ENCODE measurements at regions of chr1 and their contacts with region 1.

Region 1: GRCh38 chr1:28648474-28649198 is at the start of gene RNU11:
- DNase-seq: peak in 8 of 9 donors; percentile 67 to 97 (median 91)
- ATAC-seq: peak; percentile 86
- H3K4me3 ChIP-seq: peak within 1 kb of the TSS; percentile 60
- H3K4me3 Mint-ChIP-seq: peak within 1 kb of the TSS; percentile 70 to 96 (median 90)
- H3K27ac ChIP-seq: peak within 1 kb of the TSS; percentile 93
- H3K27ac Mint-ChIP-seq: peak within 1 kb of the TSS; percentile 97 to 100 (median 99)
- H3K4me1 ChIP-seq: peaks cover 25 to 27% of the 10 kb centered on the region in 2 donors
- H3K4me1 Mint-ChIP-seq: peaks cover 14 to 39% (median 31%) of the 10 kb centered on the region in 7 donors
- H3K27me3 ChIP-seq: no peaks in the 10 kb centered on the region
- H3K27me3 Mint-ChIP-seq: no peaks in the 10 kb centered on the region
- total RNA-seq, gene RNU11: not detected

Region 2: DNA sequence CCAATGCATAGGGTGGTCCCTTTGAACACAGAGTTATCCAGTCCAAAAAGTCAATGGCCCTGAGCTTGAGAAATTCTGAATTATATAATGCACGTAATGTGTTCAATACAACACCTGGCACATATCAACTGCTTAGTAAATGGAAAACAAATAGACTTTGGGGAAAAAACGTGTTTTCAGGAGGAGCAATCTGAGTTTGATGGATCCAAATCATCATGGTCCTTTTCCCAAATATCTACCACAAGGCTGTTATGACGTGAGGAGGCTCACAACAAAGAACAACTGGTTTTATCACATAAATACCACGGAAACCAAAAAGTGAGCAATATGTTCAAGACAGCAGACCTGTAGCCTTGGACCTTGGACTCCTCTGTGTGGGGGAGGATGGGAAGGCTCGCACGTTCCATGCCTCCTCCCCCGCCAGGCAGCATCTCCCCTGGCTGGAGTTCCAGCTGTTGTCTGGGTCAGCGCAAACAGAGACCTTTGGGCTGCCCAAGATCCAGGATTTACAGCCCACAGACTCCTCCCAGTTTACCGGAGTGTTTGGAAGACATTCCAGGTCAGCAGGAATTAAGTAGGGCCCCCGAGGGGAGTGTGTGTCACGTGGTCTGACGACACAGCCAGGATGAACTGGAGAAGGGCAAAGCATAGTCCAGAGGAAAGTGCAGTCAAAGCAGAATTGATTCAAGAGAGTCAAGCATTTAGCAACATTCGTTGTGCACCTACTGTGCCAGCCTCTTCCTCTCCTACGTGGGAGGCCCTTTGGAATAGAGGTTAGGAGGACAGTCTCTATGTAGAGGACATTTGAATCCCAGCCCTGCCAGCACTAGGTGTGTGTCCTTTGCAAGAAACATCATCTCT is 352.0 kb before region 1 on chr1:
- CTCF ChIA-PET with region 1: no interaction called
- POLR2A ChIA-PET with region 1: no interaction called
- intact Hi-C with region 1: no loop called
- DNase-seq: no peak
- ATAC-seq: no peak
- H3K4me3 ChIP-seq: no peak overlapping the region
- H3K4me3 Mint-ChIP-seq: no peak overlapping the region
- H3K27ac ChIP-seq: no peak overlapping the region
- H3K27ac Mint-ChIP-seq: no peak overlapping the region
- H3K4me1 ChIP-seq: no peaks in the 10 kb centered on the region
- H3K4me1 Mint-ChIP-seq: peaks cover 0 to 12% (median 0%) of the 10 kb centered on the region in 7 donors
- H3K27me3 ChIP-seq: no peaks in the 10 kb centered on the region
- H3K27me3 Mint-ChIP-seq: peaks cover 0 to 7% (median 4%) of the 10 kb centered on the region in 5 donors

Region 3: DNA sequence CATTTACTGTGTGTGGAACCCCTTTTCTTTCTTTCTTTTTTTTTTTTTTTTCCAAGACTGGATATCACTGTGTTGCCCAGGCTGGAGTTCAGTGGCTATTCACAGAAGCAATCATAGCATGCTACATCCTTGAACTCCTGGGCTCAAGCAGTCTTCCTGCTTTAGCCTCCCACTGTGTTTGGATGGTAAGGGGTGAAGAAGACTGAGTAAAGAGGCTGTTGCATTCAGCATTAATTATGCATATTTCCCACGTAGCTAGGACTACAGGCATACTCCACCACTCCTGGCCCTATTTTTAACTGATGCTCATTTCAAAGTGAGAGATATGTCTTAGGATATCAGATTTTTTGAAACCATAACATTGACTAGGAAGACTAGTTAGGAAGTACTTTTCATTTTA is 239.5 kb before region 1 on chr1:
- CTCF ChIA-PET with region 1: no interaction called
- POLR2A ChIA-PET with region 1: no interaction called
- intact Hi-C with region 1: loop called in 1 of 2 experiments (anchors 5 kb)
- DNase-seq: no peak
- ATAC-seq: no peak
- H3K4me3 ChIP-seq: no peak overlapping the region
- H3K4me3 Mint-ChIP-seq: no peak overlapping the region
- H3K27ac ChIP-seq: no peak overlapping the region
- H3K27ac Mint-ChIP-seq: peak overlapping the region in 1 of 9 donors; percentile 39
- H3K4me1 ChIP-seq: no peaks in the 10 kb centered on the region
- H3K4me1 Mint-ChIP-seq: peaks cover 0 to 14% (median 11%) of the 10 kb centered on the region in 7 donors
- H3K27me3 ChIP-seq: no peaks in the 10 kb centered on the region
- H3K27me3 Mint-ChIP-seq: no peaks in the 10 kb centered on the region